HEK293 (cell line): ENCODE measurements at regions of chr1 and their contacts with region 1.

Region 1: DNA sequence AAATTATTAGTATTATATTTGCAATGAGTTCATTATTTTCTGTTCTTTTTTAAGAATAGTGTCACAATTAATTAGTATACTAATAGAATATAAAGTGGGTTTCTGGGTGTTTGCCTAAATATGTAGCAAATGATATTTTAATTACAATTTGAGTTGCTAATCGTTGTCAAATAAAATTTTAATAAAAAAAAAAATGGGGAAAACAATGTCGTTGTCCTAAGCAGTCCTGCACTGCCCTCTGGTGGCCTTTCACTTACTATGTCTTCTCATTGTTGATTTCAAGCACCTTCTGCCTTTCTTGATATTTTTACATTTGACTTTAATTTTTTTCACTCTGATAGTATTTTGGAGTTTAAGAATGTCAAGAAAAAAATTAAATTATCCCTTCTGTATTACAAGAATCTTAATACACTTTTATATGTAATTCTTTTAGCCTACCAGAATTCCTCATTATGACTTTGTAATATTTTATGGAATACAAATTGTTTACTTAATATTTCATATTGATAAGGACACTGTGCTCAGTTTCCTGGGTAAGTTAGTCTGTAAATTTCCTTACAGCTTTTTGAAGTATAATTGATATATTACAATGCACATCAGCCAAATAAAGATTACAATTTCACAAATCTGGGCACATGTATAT is 104.5 kb upstream of the FMN2 start:
- H3K4me3 ChIP-seq: no peak overlapping the region
- H3K27ac ChIP-seq: no peak overlapping the region
- H3K4me1 ChIP-seq: no peaks in the 10 kb centered on the region
- CTCF ChIP-seq: peak; percentile 35

Region 2: GRCh38 chr1:239960366-239960765 is 26.9 kb before region 1 on chr1:
- CTCF ChIA-PET with region 1: interaction called, 19 read pairs
- POLR2A ChIA-PET with region 1: no interaction called
- H3K4me3 ChIP-seq: no peak overlapping the region
- H3K27ac ChIP-seq: no peak overlapping the region
- H3K4me1 ChIP-seq: no peaks in the 10 kb centered on the region
- CTCF ChIP-seq: no peak

Region 3: DNA sequence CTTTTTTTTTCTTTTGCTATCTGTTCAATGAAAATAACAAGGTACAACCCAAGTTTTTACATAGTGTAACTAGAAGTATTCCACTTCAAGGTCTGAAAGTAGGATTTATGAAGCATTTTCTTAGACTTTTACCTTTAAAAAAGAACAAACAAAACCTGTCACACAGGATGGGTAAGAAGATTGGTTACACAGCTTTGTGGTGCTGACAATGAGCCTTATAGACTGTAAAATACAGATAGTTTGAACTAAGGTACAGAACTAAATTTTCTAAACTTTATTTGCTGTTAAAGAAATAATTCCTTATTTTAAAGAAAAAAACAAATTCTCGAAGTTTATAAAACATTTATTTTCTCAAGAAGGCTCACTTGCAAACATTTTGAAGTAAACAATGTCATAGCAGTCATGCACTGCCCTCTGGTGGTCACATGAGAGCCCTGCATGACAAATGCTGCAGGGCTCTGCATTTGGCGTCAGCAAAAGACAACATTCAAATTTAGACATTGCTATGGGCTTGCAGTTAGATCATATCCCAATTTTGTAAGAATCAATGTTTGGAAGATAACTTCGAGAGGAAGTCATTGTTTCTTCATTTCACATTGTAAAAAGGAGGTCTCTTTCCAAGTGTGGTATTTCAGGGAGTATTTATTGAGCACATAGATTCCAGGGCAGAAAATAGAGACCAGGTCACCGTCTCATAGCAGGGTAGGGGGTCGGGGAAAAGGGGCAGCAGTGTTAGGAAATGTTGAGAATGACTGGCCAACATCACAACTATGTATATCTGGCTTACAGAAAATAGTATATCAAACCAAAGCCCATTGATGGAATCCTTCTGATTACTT is 10.9 kb before region 1 on chr1:
- CTCF ChIA-PET with region 1: interaction called, 14 read pairs
- POLR2A ChIA-PET with region 1: no interaction called
- H3K4me3 ChIP-seq: no peak overlapping the region
- H3K27ac ChIP-seq: no peak overlapping the region
- H3K4me1 ChIP-seq: no peaks in the 10 kb centered on the region
- CTCF ChIP-seq: peak; percentile 54

Region 4: GRCh38 chr1:239997515-239998311 is 10.5 kb after region 1 on chr1:
- CTCF ChIA-PET with region 1: interaction called, 31 read pairs
- POLR2A ChIA-PET with region 1: no interaction called
- H3K4me3 ChIP-seq: peak overlapping the region; percentile 48
- H3K27ac ChIP-seq: peak overlapping the region; percentile 42; the same call in 1 of the 2 replicates
- H3K4me1 ChIP-seq: peaks cover 6% of the 10 kb centered on the region
- CTCF ChIP-seq: peak; percentile 87

Region 5: DNA sequence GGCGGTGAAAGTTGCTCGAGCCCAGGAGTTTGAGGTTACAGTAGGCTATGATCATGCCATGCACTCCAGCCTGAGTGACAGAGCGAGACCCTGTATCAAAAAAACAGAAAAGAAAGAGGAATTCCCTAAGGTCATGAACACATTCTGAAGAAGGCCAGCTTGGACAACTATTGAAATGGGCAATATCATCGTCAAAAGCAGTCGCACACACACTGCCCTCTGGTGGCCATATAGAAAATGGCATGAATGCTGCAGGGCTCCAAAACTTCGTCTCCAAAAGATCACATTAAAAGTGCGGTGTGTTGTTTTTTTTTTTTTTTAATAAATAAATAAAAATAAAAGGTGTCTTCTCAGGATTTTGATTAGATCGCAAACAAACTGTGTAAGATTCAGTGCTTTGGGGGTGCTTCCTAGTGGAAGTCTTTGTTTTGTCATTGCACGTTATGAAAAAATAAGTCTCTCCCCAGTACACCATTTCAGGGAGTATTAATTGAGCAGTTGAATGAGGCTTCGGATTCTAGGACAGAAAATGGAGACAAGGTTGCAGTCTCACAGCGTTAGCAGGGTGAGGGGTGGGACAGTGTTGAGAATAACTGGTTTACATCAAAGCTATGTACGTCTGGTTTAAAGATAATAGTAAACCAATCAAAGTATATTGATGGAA is 17.0 kb after region 1 on chr1:
- CTCF ChIA-PET with region 1: interaction called, 33 read pairs
- POLR2A ChIA-PET with region 1: no interaction called
- H3K4me3 ChIP-seq: no peak overlapping the region
- H3K27ac ChIP-seq: no peak overlapping the region
- H3K4me1 ChIP-seq: peaks cover 6% of the 10 kb centered on the region
- CTCF ChIP-seq: 0 out of 2 replicates have a peak, but pooled peaks have one; percentile 60

Region 6: GRCh38 chr1:240021709-240022108 is 34.5 kb after region 1 on chr1:
- CTCF ChIA-PET with region 1: no interaction called
- POLR2A ChIA-PET with region 1: no interaction called
- H3K4me3 ChIP-seq: no peak overlapping the region
- H3K27ac ChIP-seq: no peak overlapping the region
- H3K4me1 ChIP-seq: no peaks in the 10 kb centered on the region
- CTCF ChIP-seq: no peak

Region 7: DNA sequence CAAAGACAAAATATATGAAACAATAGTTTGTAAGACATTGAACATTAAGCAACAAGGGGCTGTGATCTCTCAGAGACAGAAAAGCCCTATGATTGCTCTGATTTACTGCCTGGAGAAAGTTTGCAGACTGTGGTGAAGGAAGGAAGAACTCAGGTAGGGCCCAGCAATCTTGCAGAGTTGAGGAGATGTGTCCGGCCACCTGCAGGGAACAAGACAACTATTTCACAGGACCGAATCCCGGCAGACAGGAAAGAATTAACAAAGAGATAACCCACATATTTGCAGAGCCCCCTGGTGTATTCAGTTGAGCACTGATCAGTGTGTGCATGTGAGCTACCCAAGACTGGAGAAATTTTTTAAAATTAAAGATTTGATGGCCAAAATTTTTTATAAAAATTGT is 46.2 kb after region 1 on chr1:
- CTCF ChIA-PET with region 1: no interaction called
- POLR2A ChIA-PET with region 1: no interaction called
- H3K4me3 ChIP-seq: no peak overlapping the region
- H3K27ac ChIP-seq: no peak overlapping the region
- H3K4me1 ChIP-seq: no peaks in the 10 kb centered on the region
- CTCF ChIP-seq: no peak